Activated CD8-positive, alpha-beta T cell treated with anti-CD3 and anti-CD28 coated beads for 36 hours (primary cell): ENCODE measurements at regions of chr1 and their contacts with region 1.

Region 1: GRCh38 chr1:37602750-37603694 is 7.3 kb upstream of the GNL2 start:
- DNase-seq: peak; percentile 34
- ATAC-seq: peak; percentile 77
- H3K4me3 Mint-ChIP-seq: no peak overlapping the region
- H3K27ac Mint-ChIP-seq: no peak overlapping the region
- H3K4me1 Mint-ChIP-seq: no peaks in the 10 kb centered on the region
- H3K27me3 Mint-ChIP-seq: peaks cover 11% of the 10 kb centered on the region
- CTCF ChIP-seq: peak; percentile 80

Region 2: GRCh38 chr1:37588939-37589338 is 14.1 kb before region 1 on chr1:
- CTCF ChIA-PET with region 1: interaction called, 10 read pairs
- POLR2A ChIA-PET with region 1: no interaction called
- intact Hi-C with region 1: no loop called
- DNase-seq: no peak
- ATAC-seq: no peak
- H3K4me3 Mint-ChIP-seq: no peak overlapping the region
- H3K27ac Mint-ChIP-seq: no peak overlapping the region
- H3K4me1 Mint-ChIP-seq: peaks cover 27% of the 10 kb centered on the region
- H3K27me3 Mint-ChIP-seq: no peaks in the 10 kb centered on the region
- CTCF ChIP-seq: no peak

Region 3: DNA sequence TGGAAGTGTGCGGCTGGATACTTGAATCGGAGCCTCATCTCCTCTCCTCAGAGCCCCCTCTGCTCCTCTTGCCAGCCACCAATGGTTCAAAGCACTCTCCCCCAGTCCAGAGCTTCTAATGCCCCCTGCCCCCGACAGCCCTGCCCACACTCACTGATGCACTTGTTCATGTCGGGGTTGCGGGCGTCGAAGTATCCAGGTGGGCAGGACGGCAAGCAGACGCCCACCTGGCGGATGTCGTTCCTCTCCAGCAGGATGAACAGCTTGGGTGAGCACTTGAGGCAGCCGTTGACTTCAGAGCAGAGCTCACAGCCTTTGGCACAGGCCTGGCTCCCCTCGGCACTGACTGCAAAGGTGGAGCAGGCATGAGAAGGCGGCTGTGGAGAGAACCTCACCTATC is 13.3 kb after region 1 on chr1:
- CTCF ChIA-PET with region 1: interaction called, 18 read pairs
- POLR2A ChIA-PET with region 1: interaction called, 4 read pairs
- intact Hi-C with region 1: no loop called
- DNase-seq: no peak
- ATAC-seq: no peak
- H3K4me3 Mint-ChIP-seq: no peak overlapping the region
- H3K27ac Mint-ChIP-seq: no peak overlapping the region
- H3K4me1 Mint-ChIP-seq: no peaks in the 10 kb centered on the region
- H3K27me3 Mint-ChIP-seq: peaks cover 34% of the 10 kb centered on the region
- CTCF ChIP-seq: no peak

Region 4: DNA sequence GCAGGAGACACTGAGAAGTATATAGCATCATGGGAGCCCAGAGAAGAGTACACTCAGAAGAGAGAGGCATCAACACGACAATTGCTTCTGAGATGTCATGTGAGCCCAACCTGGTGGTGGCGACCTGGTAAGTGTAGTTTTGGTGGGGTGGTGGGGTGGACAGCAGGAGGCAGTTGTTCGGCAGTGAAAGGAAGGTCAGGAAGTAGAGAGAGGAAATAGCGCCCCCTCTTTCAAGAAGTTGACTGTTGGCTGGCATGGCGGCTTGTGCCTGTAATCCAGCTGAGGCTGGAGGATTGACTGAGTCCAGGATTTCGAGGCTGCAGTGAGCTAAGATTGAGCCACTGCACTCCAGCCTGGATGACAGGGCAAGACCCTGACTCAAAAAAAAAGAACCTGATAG is 19.1 kb after region 1 on chr1:
- CTCF ChIA-PET with region 1: interaction called, 10 read pairs
- POLR2A ChIA-PET with region 1: interaction called, 3 read pairs
- intact Hi-C with region 1: no loop called
- DNase-seq: peak; percentile 13
- ATAC-seq: no peak
- H3K4me3 Mint-ChIP-seq: no peak overlapping the region
- H3K27ac Mint-ChIP-seq: no peak overlapping the region
- H3K4me1 Mint-ChIP-seq: no peaks in the 10 kb centered on the region
- H3K27me3 Mint-ChIP-seq: peaks cover 22% of the 10 kb centered on the region
- CTCF ChIP-seq: no peak

Region 5: GRCh38 chr1:37692078-37692833 is 89.2 kb after region 1 on chr1 and contains the start of gene CDCA8:
- CTCF ChIA-PET with region 1: interaction called, 15 read pairs
- POLR2A ChIA-PET with region 1: interaction called, 5 read pairs
- intact Hi-C with region 1: no loop called
- DNase-seq: peak; percentile 99
- ATAC-seq: peak; percentile 90
- H3K4me3 Mint-ChIP-seq: peak within 1 kb of the TSS; percentile 98
- H3K27ac Mint-ChIP-seq: peak within 1 kb of the TSS; percentile 93
- H3K4me1 Mint-ChIP-seq: peaks cover 31% of the 10 kb centered on the region
- H3K27me3 Mint-ChIP-seq: no peaks in the 10 kb centered on the region
- CTCF ChIP-seq: no peak
- total RNA-seq, gene CDCA8: 53.7 to 56.0 TPM